Dorsolateral prefrontal cortex (tissue), 120 donors: ENCODE measurements at regions of chr5 and their contacts with region 1.

Region 1: GRCh38 chr5:34538026-34538672 is 118.0 kb upstream of the RAI14 start:
- DNase-seq: peak in 1 of 10 donors; percentile 24
- H3K4me3 ChIP-seq: no peak overlapping the region
- H3K27ac ChIP-seq: no peak overlapping the region
- H3K27me3 ChIP-seq: peaks cover 0 to 6% (median 0%) of the 10 kb centered on the region in 45 donors
- CTCF ChIP-seq: peak in 39 of 56 donors; percentile 13 to 64 (median 37)

Region 2: GRCh38 chr5:34474573-34475021 is 63.6 kb before region 1 on chr5:
- intact Hi-C with region 1: loop called in 1 of 2 experiments (anchors 5 kb)
- DNase-seq: no peak
- H3K4me3 ChIP-seq: no peak overlapping the region
- H3K27ac ChIP-seq: peak overlapping the region in 3 of 59 donors; percentile 18 to 23 (median 22)
- H3K27me3 ChIP-seq: peaks cover 0 to 8% (median 0%) of the 10 kb centered on the region in 45 donors
- CTCF ChIP-seq: peak; percentile 75 to 99 (median 97)

Region 3: GRCh38 chr5:34503379-34504253 is 34.5 kb before region 1 on chr5:
- intact Hi-C with region 1: loop called in 1 of 2 experiments (anchors 5 kb)
- DNase-seq: peak in 7 of 10 donors; percentile 21 to 81 (median 48)
- H3K4me3 ChIP-seq: peak overlapping the region in 47 of 59 donors; percentile 1 to 57 (median 29)
- H3K27ac ChIP-seq: peak overlapping the region; percentile 43 to 96 (median 87)
- H3K27me3 ChIP-seq: no peaks in the 10 kb centered on the region
- CTCF ChIP-seq: peak in 10 of 56 donors; percentile 7 to 45 (median 18)